Activated T-helper 2 cell treated with anti-CD3 and anti-CD28 coated beads, Interferon-gamma antibody, Interleukin-2, Interleukin-4, amounts not matched to agents 10 μg/mL and 5 μg/mL and 100 μg/mL, durations not matched to agents 14 hours and 24 hours and 36 hours (primary cell): ENCODE measurements at regions of chr5 and their contacts with region 1.

Region 1: GRCh38 chr5:177425801-177426565 is 493 bp upstream of the GRK6 start:
- DNase-seq: peak; percentile 99
- H3K4me3 Mint-ChIP-seq: peak overlapping the region; percentile 82
- H3K27ac Mint-ChIP-seq: peak overlapping the region; percentile 82
- H3K4me1 Mint-ChIP-seq: peaks cover 46% of the 10 kb centered on the region
- H3K27me3 Mint-ChIP-seq: no peaks in the 10 kb centered on the region

Region 2: DNA sequence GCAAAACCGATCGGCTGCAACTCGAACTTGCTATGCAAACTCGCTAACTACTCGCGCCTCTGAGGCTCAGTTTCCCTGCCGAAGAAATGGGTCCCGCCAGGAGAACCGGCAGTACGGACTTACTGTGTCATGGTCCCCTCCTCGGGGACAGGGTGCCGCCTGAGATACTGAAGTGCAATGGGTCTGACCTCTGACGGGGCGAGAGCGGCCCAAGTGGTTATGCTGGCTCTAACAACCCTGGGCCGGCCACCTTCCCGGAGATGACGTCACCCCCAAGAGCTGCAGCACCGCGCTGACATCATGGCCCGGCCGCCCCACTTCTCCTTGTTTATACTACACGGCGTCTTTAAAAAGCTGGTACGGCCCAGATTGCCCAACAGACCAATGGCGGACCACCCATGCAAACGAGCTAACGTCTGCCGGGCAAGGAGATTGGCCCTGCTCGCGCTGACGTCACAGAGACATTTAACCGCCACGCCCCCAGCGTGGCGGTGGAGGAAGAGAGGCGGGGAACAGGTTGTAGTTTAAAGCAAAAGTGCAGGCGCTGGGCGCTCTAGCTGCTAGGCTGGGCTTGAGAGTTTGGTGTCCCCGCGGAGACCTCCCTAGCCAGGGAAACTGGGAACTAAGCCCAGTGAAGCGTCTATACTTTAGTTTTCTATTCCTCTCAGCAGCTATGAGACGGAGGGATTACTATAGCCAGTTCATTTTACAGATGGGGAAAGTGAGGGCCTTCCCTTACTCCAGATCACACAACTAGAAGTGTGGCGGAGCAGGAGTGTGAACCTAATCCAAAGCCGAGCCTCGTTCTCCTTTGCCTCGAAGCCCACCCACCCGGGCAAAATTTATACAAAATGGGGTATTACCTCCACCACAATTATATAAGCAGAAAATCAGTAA is 888.1 kb before region 1 on chr5:
- intact Hi-C with region 1: loop called (anchors 2 kb)
- DNase-seq: peak; percentile 98
- H3K4me3 Mint-ChIP-seq: peak overlapping the region; percentile 98
- H3K27ac Mint-ChIP-seq: peak overlapping the region; percentile 96
- H3K4me1 Mint-ChIP-seq: peaks cover 58% of the 10 kb centered on the region
- H3K27me3 Mint-ChIP-seq: no peaks in the 10 kb centered on the region

Region 3: DNA sequence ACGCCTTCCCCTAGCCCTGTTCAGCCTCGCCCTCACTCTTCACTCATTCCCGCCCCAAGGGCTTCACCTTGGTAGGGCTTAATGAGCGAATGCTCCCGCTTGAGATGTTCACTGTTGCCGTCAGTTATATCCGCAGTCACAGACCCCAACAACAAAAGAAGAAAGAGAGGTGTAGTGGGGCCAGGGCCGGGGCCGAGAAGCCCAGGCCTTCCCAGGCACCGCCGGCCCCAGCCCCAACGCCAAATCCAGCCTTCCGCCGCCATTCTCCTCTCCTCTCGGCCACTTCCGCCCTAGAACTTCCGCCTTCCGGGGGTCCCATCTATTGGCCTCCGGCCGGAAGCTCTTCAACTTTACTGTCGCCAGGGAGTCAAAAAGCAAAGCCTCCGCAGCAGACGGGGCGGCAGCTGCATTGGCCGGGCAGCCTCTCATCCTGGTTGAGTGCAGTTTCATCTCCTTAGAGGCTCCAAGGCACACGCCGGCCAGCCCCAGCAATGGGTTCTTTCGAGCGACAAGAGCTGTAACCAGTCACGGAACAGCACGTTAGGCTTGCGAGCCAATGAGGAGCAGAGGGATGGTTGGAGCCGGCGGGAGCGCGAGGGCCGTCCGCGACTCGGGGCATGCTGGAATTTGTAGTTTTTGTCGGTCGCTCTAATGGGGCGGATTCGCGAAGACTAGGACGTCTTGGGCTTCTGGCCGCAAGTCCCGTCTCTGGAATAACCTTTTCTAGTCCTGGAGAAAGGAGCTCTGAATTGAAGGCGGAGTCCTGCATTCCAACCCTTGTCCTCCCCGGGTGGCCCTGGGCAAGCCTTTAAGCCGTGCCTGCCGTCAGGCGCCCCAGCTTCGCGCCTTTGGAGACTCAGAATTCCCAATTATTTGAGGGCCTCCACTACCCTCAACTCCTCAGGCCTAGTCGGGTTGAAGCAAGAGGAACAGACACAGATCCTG is 74.3 kb before region 1 on chr5 and contains the start of gene LMAN2:
- intact Hi-C with region 1: loop called (anchors 1 kb)
- DNase-seq: peak; percentile 92
- H3K4me3 Mint-ChIP-seq: peak within 1 kb of the TSS; percentile 95
- H3K27ac Mint-ChIP-seq: peak within 1 kb of the TSS; percentile 100
- H3K4me1 Mint-ChIP-seq: peaks cover 44% of the 10 kb centered on the region
- H3K27me3 Mint-ChIP-seq: no peaks in the 10 kb centered on the region
- total RNA-seq, gene LMAN2: 130 and 137 TPM in 2 replicates

Region 4: GRCh38 chr5:177403792-177404640 is 22.0 kb before region 1 on chr5:
- intact Hi-C with region 1: loop called (anchors 1 kb)
- DNase-seq: peak; percentile 81
- H3K4me3 Mint-ChIP-seq: peak overlapping the region; percentile 79
- H3K27ac Mint-ChIP-seq: no peak overlapping the region
- H3K4me1 Mint-ChIP-seq: peaks cover 19% of the 10 kb centered on the region
- H3K27me3 Mint-ChIP-seq: peaks cover 23% of the 10 kb centered on the region

Region 5: DNA sequence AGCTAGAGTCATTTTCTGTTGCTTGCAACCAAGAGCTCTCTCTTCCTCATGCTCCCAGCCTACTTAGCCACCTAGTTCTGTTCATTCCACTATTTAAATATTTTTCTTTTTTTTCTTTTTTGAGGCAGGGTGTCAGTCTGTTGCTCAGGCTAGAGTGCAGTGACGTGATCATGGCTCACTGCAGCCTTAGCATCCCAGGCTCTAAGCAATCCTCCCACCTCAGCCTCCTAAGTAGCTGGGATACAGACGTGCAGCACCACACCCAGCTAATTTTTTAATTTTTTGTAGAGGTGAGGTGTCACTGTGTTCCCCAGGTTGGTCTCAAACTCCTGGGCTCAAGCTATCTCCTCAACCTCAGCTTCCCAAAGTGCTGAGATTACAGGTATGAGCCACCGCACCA is 11.5 kb before region 1 on chr5:
- intact Hi-C with region 1: no loop called
- DNase-seq: no peak
- H3K4me3 Mint-ChIP-seq: no peak overlapping the region
- H3K27ac Mint-ChIP-seq: no peak overlapping the region
- H3K4me1 Mint-ChIP-seq: peaks cover 21% of the 10 kb centered on the region
- H3K27me3 Mint-ChIP-seq: no peaks in the 10 kb centered on the region

Region 6: GRCh38 chr5:177454397-177455035 is 28.5 kb after region 1 on chr5:
- intact Hi-C with region 1: loop called (anchors 1 kb)
- DNase-seq: peak; percentile 89
- H3K4me3 Mint-ChIP-seq: peak overlapping the region; percentile 84
- H3K27ac Mint-ChIP-seq: no peak overlapping the region
- H3K4me1 Mint-ChIP-seq: peaks cover 17% of the 10 kb centered on the region
- H3K27me3 Mint-ChIP-seq: peaks cover 8% of the 10 kb centered on the region

Region 7: GRCh38 chr5:177516604-177517568 is 90.9 kb after region 1 on chr5 and contains the start of gene DDX41:
- intact Hi-C with region 1: loop called (anchors 1 kb)
- DNase-seq: peak; percentile 97
- H3K4me3 Mint-ChIP-seq: peak within 1 kb of the TSS; percentile 87
- H3K27ac Mint-ChIP-seq: peak within 1 kb of the TSS; percentile 80
- H3K4me1 Mint-ChIP-seq: peaks cover 27% of the 10 kb centered on the region
- H3K27me3 Mint-ChIP-seq: no peaks in the 10 kb centered on the region
- total RNA-seq, gene DDX41: 138 and 144 TPM in 2 replicates